ENCODE measurements at regions of chr5 and their contacts with region 1.

Region 1: DNA sequence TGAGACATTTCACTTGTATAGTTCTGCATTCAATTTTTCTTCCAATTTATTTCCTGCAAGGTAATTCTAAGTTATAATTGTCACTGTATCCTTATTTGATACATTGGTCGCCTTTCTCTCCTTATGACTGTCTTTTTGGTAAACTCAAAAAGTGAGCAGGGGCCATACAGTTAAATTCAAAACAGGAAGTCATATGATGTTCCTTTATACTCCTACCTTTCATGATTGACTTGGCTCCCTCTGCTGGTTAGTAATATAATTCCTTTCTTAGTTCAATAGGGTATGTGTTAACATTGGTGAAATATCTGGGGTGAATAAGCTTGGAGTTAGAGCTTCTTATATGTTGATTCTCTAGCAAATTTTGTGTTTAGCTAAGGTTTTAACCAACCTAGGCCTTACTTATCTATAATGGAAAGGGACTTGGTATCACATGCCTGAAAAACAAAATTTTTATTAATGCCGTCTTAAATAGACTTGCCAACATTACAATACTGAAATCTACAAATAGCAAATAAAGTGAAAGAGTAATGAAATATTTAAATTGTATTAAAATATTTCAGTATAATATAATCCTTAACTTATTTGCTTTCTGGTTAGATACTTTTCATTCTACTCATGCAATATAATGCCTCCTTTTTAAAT is 6.0 kb upstream of the NIPBL start:
- DNase-seq: no peak
- ATAC-seq: peak; percentile 79
- H3K4me3 ChIP-seq: no peak overlapping the region
- H3K27ac ChIP-seq: no peak overlapping the region
- H3K4me1 ChIP-seq: peaks cover 7% of the 10 kb centered on the region; the same call in 1 of the 2 replicates
- H3K27me3 ChIP-seq: no peaks in the 10 kb centered on the region
- CTCF ChIP-seq: peak; percentile 36 to 66 (median 58); a peak in 5 of 6 replicates
- EP300 ChIP-seq: no peak
- POLR2A ChIP-seq: no peak
- RAD21 ChIP-seq: peak; percentile 59

Region 2: DNA sequence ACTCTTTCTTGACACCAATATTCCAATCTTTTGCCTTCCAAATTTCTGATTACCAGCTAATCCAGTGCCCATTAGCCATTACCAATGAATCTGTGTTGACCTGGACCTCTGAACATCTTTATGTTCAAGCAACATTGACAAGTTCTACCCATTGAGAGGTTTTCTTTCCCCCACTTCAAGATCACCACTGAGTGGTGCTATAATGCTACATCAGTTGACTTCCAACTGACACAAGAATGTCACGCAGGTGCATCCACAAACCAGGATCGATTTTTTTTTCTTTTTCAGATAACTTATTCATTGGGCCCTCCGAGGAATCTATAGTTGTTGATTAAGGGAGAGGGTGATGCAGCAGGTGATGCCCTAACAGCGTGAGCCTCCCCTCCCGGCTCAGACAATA is 161.5 kb before region 1 on chr5:
- CTCF ChIA-PET with region 1: interaction called, 5 read pairs
- POLR2A ChIA-PET with region 1: no interaction called
- RAD21 ChIA-PET with region 1: no interaction called
- SMC1A ChIA-PET with region 1: interaction called, 11 read pairs
- in situ Hi-C with region 1: no loop called
- intact Hi-C with region 1: no loop called
- DNase-seq: no peak
- ATAC-seq: no peak
- H3K4me3 ChIP-seq: no peak overlapping the region
- H3K27ac ChIP-seq: no peak overlapping the region
- H3K4me1 ChIP-seq: no peaks in the 10 kb centered on the region
- H3K27me3 ChIP-seq: no peaks in the 10 kb centered on the region
- CTCF ChIP-seq: no peak
- EP300 ChIP-seq: no peak
- POLR2A ChIP-seq: no peak
- RAD21 ChIP-seq: no peak

Region 3: GRCh38 chr5:36734422-36734821 is 136.1 kb before region 1 on chr5:
- CTCF ChIA-PET with region 1: interaction called, 36 read pairs
- POLR2A ChIA-PET with region 1: interaction called, 4 read pairs
- RAD21 ChIA-PET with region 1: interaction called, 11 read pairs
- SMC1A ChIA-PET with region 1: interaction called, 20 read pairs
- in situ Hi-C with region 1: loop called (anchors 5 kb)
- intact Hi-C with region 1: loop called (anchors 1 kb)
- DNase-seq: no peak
- ATAC-seq: peak; percentile 80
- H3K4me3 ChIP-seq: no peak overlapping the region
- H3K27ac ChIP-seq: no peak overlapping the region
- H3K4me1 ChIP-seq: no peaks in the 10 kb centered on the region
- H3K27me3 ChIP-seq: no peaks in the 10 kb centered on the region
- CTCF ChIP-seq: peak in 2 of 3 experiments; percentile 6 to 50; a peak in 3 of 6 replicates
- EP300 ChIP-seq: no peak
- POLR2A ChIP-seq: no peak
- RAD21 ChIP-seq: peak; percentile 51

Region 4: DNA sequence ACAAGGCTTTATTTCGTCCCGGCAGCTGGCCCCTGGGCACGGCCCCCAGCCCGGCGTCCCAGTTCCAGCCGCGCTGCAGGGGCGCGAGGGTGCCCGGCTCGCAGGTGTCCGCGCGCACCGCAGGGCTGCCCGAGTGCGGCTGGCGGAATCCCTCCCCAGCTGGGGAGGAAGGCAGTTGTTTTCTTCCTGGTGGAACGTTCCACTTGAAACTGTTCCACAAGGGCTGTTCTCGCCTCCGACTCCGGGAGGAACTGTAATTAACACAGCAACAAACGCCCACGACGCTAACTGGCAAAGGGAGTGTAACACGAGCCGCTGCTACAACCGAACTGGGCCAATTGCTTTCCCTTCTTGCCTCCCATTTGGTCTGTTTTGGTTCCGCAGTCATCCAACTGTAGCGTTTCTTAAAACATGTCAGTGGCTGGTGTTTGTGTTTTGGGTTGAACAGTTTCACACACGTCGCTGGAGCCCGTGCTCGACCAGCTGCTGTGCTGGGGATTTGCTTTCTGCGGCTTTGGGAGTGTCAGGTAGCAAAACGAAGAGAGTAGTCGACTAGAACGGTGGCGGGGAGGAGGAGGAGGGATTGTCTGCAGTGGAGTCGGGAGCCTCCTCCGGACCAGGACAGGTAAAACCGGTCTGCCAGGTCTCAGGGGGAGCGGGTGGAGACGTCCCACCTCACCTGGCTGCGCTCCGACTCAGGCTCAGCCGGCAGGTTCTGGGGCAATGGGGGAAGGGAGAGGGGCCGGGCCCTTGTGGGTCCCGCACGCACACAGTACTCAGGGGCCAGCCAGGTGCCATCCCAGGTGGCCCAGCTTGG is 125.5 kb before region 1 on chr5:
- CTCF ChIA-PET with region 1: interaction called, 47 read pairs
- POLR2A ChIA-PET with region 1: interaction called, 3 read pairs
- RAD21 ChIA-PET with region 1: interaction called, 14 read pairs
- SMC1A ChIA-PET with region 1: interaction called, 20 read pairs
- in situ Hi-C with region 1: no loop called
- intact Hi-C with region 1: no loop called
- DNase-seq: no peak
- ATAC-seq: peak; percentile 83
- H3K4me3 ChIP-seq: peak overlapping the region; percentile 59
- H3K27ac ChIP-seq: no peak overlapping the region
- H3K4me1 ChIP-seq: peaks cover 5% of the 10 kb centered on the region; the same call in 1 of the 2 replicates
- H3K27me3 ChIP-seq: peaks cover 0 to 3% of the 10 kb centered on the region in 2 experiments; a peak in 1 of 4 replicates
- CTCF ChIP-seq: no peak
- EP300 ChIP-seq: no peak
- POLR2A ChIP-seq: no peak
- RAD21 ChIP-seq: peak; percentile 53; the same call in 1 of the 2 replicates

Region 5: GRCh38 chr5:36944607-36945225 is 74.2 kb after region 1 on chr5:
- CTCF ChIA-PET with region 1: interaction called, 30 read pairs
- POLR2A ChIA-PET with region 1: no interaction called
- RAD21 ChIA-PET with region 1: interaction called, 35 read pairs
- SMC1A ChIA-PET with region 1: interaction called, 15 read pairs
- in situ Hi-C with region 1: no loop called
- intact Hi-C with region 1: no loop called
- DNase-seq: no peak
- ATAC-seq: peak; percentile 38
- H3K4me3 ChIP-seq: no peak overlapping the region
- H3K27ac ChIP-seq: no peak overlapping the region
- H3K4me1 ChIP-seq: no peaks in the 10 kb centered on the region
- H3K27me3 ChIP-seq: no peaks in the 10 kb centered on the region
- CTCF ChIP-seq: peak in 2 of 3 experiments; percentile 44 to 47; a peak in 3 of 6 replicates
- EP300 ChIP-seq: no peak
- POLR2A ChIP-seq: no peak
- RAD21 ChIP-seq: peak; percentile 38; the same call in 1 of the 2 replicates